OCI-LY7 (cell line): ENCODE measurements at regions of chr1 and their contacts with region 1.

Region 1: GRCh38 chr1:53771648-53772047 is 32.7 kb upstream of the GLIS1 start:
- DNase-seq: no peak
- H3K4me3 ChIP-seq: no peak overlapping the region
- H3K27ac ChIP-seq: no peak overlapping the region
- H3K4me1 ChIP-seq: no peaks in the 10 kb centered on the region
- CTCF ChIP-seq: no peak

Region 2: GRCh38 chr1:53819387-53819786 is 47.7 kb after region 1 on chr1:
- CTCF ChIA-PET with region 1: no interaction called
- POLR2A ChIA-PET with region 1: interaction called, 3 read pairs
- intact Hi-C with region 1: loop called (anchors 5 kb)
- DNase-seq: no peak
- H3K4me3 ChIP-seq: no peak overlapping the region
- H3K27ac ChIP-seq: no peak overlapping the region
- H3K4me1 ChIP-seq: peaks cover under 1% of the 10 kb centered on the region
- CTCF ChIP-seq: no peak

Region 3: GRCh38 chr1:54474639-54475251 is 703.1 kb after region 1 on chr1:
- CTCF ChIA-PET with region 1: no interaction called
- POLR2A ChIA-PET with region 1: no interaction called
- intact Hi-C with region 1: no loop called
- DNase-seq: no peak
- H3K4me3 ChIP-seq: no peak overlapping the region
- H3K27ac ChIP-seq: no peak overlapping the region
- H3K4me1 ChIP-seq: peaks cover 31% of the 10 kb centered on the region
- CTCF ChIP-seq: no peak